ENCODE measurements at regions of chr10 and their contacts with region 1.

Region 1: GRCh38 chr10:43292755-43293676 is 26.2 kb upstream of the RASGEF1A start:
- DNase-seq: peak; percentile 68
- H3K4me3 Mint-ChIP-seq: no peak overlapping the region
- H3K27ac Mint-ChIP-seq: peak overlapping the region; percentile 49
- H3K4me1 Mint-ChIP-seq: peaks cover 50% of the 10 kb centered on the region
- H3K27me3 Mint-ChIP-seq: no peaks in the 10 kb centered on the region

Region 2: DNA sequence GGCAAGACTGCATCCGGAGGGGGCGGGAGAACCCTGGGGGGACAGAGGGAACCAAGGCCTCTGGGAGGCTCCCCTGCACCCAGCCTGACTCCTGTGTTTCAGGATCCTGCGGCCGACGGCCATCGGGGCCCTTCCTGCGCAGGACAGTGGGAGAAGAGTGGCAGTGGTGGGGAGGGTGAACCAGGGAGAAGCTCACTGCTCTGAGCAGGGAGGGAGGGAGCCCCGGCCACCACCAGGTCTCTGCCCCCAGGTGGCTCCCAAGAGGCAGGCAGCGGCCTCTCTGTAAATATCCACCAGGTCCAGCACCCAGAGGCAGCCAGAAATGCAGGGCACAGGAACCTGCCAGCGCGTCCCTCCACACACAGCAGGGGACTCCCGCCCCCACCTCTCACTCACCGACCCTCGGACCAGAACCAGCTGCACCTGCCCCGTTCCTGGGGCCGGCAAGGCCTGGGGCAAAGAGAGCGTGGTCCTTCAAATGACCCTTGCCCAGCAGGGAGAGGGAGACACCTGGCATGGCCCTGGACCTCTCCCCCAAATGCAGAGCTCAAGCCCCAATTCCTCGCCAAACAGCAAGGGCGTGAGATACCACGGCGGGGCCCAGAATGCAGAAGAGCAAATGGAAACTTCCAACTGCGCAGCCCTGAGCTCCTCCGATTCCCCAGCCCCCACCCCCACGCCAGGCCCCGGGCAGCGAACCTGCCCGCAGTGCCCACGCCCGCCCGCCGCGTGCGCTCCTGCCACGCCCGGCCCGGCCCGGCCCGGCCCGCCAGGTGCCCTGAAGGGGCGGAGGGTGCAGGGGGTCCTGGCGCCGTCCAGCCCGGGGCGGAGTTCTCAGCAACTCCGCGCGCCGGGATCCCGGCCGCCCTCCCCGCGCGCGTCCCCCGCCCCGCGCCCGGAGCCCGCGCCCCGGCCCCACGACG is 27.0 kb before region 1 on chr10:
- CTCF ChIA-PET with region 1: interaction called, 15 read pairs
- POLR2A ChIA-PET with region 1: no interaction called
- intact Hi-C with region 1: no loop called
- DNase-seq: peak; percentile 62
- H3K4me3 Mint-ChIP-seq: peak overlapping the region; percentile 67
- H3K27ac Mint-ChIP-seq: no peak overlapping the region
- H3K4me1 Mint-ChIP-seq: peaks cover 4% of the 10 kb centered on the region
- H3K27me3 Mint-ChIP-seq: peaks cover 25% of the 10 kb centered on the region

Region 3: GRCh38 chr10:43304687-43305340 is 11.8 kb after region 1 on chr10:
- CTCF ChIA-PET with region 1: interaction called, 29 read pairs
- POLR2A ChIA-PET with region 1: interaction called, 3 read pairs
- intact Hi-C with region 1: no loop called
- DNase-seq: peak; percentile 78
- H3K4me3 Mint-ChIP-seq: peak overlapping the region; percentile 69
- H3K27ac Mint-ChIP-seq: peak overlapping the region; percentile 23
- H3K4me1 Mint-ChIP-seq: peaks cover 58% of the 10 kb centered on the region
- H3K27me3 Mint-ChIP-seq: no peaks in the 10 kb centered on the region

Region 4: DNA sequence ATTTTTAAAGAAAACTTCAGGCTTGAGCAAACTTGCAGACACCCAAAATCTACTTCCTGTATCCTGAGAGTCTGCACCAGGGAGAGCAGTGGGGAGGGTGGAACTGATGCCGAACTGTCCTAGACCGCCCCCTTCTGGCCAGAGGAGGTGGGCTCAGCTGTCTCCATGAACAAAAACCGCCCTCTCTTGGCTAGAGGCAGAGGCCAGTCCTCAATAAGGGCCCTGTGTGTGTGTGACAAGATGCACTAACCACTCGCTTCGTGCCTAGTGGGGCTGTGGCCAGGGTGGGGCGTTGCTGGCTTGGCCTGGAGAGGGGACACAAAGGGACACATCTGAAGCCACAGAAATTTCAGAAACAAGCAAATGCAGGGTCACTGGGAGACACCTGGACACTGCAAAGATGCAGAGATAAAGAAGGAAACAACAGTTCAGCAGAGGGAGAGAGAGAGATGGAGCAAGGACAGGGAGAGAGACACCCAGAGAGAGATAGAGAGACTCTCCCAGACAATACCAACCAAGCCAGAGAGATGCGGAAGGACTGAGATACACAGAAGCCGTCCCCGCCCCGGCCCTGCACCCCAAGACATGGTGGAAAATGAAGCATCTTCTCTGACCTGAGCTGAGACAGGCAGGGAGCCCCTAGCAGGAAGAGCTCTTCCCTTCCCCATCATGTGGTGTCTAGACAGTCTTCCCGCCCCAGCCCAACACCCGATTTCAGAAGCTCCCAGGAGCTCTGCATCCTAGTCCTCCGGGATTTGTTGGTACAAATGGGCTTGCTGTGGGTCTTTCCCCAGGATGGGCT is 55.7 kb after region 1 on chr10:
- CTCF ChIA-PET with region 1: interaction called, 130 read pairs
- POLR2A ChIA-PET with region 1: interaction called, 6 read pairs
- intact Hi-C with region 1: loop called (anchors 1 kb)
- DNase-seq: peak; percentile 92
- H3K4me3 Mint-ChIP-seq: no peak overlapping the region
- H3K27ac Mint-ChIP-seq: no peak overlapping the region
- H3K4me1 Mint-ChIP-seq: peaks cover 16% of the 10 kb centered on the region
- H3K27me3 Mint-ChIP-seq: peaks cover 12% of the 10 kb centered on the region

Region 5: DNA sequence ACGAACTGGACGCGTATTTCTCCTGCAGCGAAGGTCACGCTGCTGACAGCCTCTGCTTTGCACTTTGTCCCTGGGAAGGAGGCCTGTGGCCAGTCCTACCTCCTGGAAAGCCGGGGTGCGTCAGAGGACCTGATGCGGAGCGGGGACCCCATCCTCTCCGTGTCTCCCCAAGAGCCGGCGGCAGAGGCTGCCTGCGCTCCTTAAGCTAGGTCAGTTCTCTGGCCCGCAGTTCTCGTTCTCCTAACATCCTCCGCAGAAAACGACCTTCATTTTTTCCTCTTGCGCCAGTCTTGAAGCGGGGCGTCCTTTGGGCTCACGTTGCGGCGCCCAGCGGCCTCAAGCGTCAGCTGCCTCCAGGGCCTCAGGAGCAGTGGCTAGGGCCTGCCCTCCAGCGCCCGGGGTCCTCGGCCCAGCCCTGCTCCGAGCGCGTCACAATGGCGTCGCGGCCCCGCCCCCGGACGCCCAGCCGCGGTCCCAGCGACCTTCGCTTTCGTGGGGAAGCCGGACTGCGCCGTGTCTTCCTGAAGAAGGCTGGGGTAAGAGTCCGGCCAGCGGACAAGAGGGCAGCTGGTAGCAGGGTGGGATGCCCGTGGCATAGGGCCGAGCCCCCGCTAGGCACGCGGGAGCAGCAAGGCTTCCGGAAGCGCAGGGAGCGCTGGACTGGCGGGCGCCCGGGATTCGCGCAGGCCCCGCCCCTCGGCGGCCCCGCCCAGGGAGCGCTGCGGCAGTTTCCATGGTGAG is 143.6 kb after region 1 on chr10 and contains the start of gene ZNF487:
- CTCF ChIA-PET with region 1: no interaction called
- POLR2A ChIA-PET with region 1: no interaction called
- intact Hi-C with region 1: no loop called
- DNase-seq: peak; percentile 94
- H3K4me3 Mint-ChIP-seq: peak within 1 kb of the TSS; percentile 83
- H3K27ac Mint-ChIP-seq: peak within 1 kb of the TSS; percentile 92
- H3K4me1 Mint-ChIP-seq: peaks cover 14% of the 10 kb centered on the region
- H3K27me3 Mint-ChIP-seq: no peaks in the 10 kb centered on the region
- total RNA-seq, gene ZNF487: 2.2 to 2.6 TPM

Region 6: DNA sequence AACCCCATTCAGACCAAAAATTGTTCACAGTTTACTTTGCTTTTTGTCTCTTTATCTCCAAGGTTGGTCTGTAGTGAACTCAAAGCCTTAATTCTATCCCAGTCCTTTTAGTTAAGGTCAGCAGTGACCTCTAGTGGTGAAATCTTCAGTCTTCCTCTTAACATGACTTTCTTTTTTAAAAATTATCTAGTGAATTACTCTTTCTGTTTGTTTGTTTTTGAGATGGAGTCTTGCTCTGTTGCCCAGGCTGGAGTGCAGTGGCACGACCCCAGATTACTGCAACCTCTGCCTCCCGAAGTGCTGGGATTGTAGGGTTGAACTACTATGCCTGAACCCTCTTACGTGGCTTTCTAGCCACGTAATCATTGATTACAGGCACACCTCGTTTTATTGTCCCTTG is 168.9 kb after region 1 on chr10:
- CTCF ChIA-PET with region 1: interaction called, 19 read pairs
- POLR2A ChIA-PET with region 1: no interaction called
- intact Hi-C with region 1: loop called (anchors 1 kb)
- DNase-seq: no peak
- H3K4me3 Mint-ChIP-seq: no peak overlapping the region
- H3K27ac Mint-ChIP-seq: peak overlapping the region; percentile 54
- H3K4me1 Mint-ChIP-seq: peaks cover 18% of the 10 kb centered on the region
- H3K27me3 Mint-ChIP-seq: no peaks in the 10 kb centered on the region